Mammary epithelial cell (primary cell): ENCODE measurements at regions of chr1 and their contacts with region 1.

Region 1: GRCh38 chr1:55679971-55680370 is 464.8 kb upstream of the USP24 start:
- DNase-seq: no peak
- H3K4me3 ChIP-seq: no peak overlapping the region
- H3K27ac ChIP-seq: no peak overlapping the region
- H3K4me1 ChIP-seq: no peaks in the 10 kb centered on the region
- H3K27me3 ChIP-seq: no peaks in the 10 kb centered on the region
- CTCF ChIP-seq: no peak

Region 2: DNA sequence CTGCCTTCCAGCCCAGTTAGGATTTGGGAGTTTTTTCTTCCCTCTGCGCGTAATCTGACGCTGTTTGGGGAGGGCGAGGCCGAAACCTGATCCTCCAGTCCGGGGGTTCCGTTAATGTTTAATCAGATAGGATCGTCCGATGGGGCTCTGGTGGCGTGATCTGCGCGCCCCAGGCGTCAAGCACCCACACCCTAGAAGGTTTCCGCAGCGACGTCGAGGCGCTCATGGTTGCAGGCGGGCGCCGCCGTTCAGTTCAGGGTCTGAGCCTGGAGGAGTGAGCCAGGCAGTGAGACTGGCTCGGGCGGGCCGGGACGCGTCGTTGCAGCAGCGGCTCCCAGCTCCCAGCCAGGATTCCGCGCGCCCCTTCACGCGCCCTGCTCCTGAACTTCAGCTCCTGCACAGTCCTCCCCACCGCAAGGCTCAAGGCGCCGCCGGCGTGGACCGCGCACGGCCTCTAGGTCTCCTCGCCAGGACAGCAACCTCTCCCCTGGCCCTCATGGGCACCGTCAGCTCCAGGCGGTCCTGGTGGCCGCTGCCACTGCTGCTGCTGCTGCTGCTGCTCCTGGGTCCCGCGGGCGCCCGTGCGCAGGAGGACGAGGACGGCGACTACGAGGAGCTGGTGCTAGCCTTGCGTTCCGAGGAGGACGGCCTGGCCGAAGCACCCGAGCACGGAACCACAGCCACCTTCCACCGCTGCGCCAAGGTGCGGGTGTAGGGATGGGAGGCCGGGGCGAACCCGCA is 640.5 kb before region 1 on chr1 and contains the start of gene PCSK9:
- CTCF ChIA-PET with region 1: no interaction called
- dilution Hi-C with region 1: no loop called
- in situ Hi-C with region 1: no loop called
- intact Hi-C with region 1: no loop called
- DNase-seq: peak; percentile 77
- H3K4me3 ChIP-seq: peak within 1 kb of the TSS; percentile 18 to 73 (median 56)
- H3K27ac ChIP-seq: peak within 1 kb of the TSS; percentile 58
- H3K4me1 ChIP-seq: peaks cover 28% of the 10 kb centered on the region
- H3K27me3 ChIP-seq: peaks cover 10% of the 10 kb centered on the region
- CTCF ChIP-seq: no peak
- total RNA-seq, gene PCSK9: 0.67 to 75.0 TPM

Region 3: DNA sequence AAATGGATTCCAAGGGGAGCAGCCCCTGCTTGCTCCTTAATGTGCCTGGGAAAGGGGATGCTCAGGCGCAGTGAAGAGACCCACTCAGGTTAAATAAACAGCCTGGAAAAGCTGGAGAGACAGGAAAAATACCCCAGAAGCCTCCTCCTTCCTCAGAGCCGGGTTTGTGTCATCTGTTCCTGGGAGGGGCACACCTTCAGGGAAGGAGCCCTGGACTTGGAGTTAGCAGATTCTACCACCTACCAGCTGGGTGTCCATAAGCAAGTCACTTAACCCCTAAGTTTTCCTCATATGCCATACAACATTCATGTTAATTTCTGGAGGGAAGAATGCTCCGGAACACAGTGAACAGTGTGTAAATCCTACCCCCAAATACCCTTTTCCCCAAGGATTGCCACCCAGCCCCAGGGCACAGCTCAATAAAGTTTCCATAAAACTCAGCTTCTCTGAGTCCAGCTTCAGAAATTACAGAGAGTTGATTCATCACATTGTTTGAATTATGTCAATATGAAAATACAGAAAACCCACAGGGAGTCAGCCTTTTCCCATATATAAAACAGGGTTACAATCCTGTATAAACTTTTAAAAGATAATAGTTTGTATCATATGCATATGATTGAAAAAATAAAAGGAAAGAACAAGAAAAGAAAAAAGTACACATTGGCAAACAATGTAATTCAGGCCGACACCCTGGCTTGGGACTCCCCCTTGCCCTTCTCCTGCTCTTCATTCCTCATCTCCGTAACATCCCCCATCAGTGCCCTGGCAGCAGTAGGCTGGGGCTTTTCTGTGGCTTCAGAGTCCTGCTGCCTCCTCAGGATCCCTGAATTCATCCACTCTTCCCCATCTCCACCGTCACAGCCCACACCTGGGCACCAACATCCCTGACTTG is 173.0 kb before region 1 on chr1:
- CTCF ChIA-PET with region 1: no interaction called
- dilution Hi-C with region 1: no loop called
- in situ Hi-C with region 1: no loop called
- intact Hi-C with region 1: no loop called
- DNase-seq: peak; percentile 40
- H3K4me3 ChIP-seq: no peak overlapping the region
- H3K27ac ChIP-seq: no peak overlapping the region
- H3K4me1 ChIP-seq: peaks cover 11% of the 10 kb centered on the region
- H3K27me3 ChIP-seq: no peaks in the 10 kb centered on the region
- CTCF ChIP-seq: no peak

Region 4: DNA sequence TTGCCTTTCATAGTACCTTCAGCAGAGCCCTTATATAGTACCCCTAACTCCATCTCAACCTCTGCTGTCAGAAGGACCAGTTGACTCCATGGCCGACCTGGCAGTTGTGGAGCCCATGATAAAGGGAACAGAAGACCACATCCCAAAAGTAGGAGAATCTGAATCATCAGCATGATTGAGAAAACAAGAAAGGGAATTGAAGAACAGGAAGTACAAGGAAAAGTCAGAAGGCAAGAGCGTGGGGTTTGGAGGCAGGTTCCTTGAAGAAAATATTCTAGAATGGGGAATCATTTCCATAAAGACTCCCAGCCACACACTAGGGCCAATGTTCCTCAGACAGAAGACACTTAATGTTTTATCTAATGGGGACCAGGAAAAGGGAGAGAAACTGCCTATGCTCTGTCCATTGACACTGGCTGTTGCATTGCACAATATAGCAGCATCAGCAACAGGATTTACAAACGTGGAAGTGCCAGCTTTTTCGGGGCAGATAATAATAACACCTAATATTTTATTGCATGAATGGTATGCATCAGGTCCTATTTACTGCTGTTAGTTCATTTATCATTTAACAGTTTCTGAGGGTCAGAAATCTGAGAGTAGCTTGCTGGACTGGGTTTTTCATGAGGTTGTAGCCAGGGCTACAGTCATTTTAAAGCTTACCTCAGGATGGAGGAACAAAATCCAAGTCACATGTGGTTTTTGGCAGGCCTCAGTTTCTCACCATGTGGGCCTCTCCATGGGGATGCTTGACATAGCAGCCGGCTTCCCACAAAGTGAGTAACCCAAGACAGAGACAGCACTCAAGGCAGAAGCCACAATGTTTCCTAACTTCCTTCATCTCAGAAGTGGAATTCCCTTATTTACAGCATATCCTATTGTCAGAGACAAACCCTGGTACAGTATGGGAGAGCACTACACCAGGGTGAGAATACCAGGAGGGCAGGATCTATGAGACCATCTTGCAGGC is 416.0 kb after region 1 on chr1:
- CTCF ChIA-PET with region 1: no interaction called
- dilution Hi-C with region 1: no loop called
- in situ Hi-C with region 1: no loop called
- intact Hi-C with region 1: no loop called
- DNase-seq: peak; percentile 52
- H3K4me3 ChIP-seq: no peak overlapping the region
- H3K27ac ChIP-seq: no peak overlapping the region
- H3K4me1 ChIP-seq: no peaks in the 10 kb centered on the region
- H3K27me3 ChIP-seq: no peaks in the 10 kb centered on the region
- CTCF ChIP-seq: no peak

Region 5: GRCh38 chr1:56557746-56558145 is 877.8 kb after region 1 on chr1:
- CTCF ChIA-PET with region 1: interaction called, 28 read pairs
- dilution Hi-C with region 1: no loop called
- in situ Hi-C with region 1: no loop called
- intact Hi-C with region 1: no loop called
- DNase-seq: no peak
- H3K4me3 ChIP-seq: no peak overlapping the region
- H3K27ac ChIP-seq: no peak overlapping the region
- H3K4me1 ChIP-seq: no peaks in the 10 kb centered on the region
- H3K27me3 ChIP-seq: no peaks in the 10 kb centered on the region
- CTCF ChIP-seq: no peak

Region 6: GRCh38 chr1:57007948-57008347 is 1328.0 kb after region 1 on chr1:
- CTCF ChIA-PET with region 1: no interaction called
- dilution Hi-C with region 1: no loop called
- in situ Hi-C with region 1: no loop called
- intact Hi-C with region 1: no loop called
- DNase-seq: no peak
- H3K4me3 ChIP-seq: no peak overlapping the region
- H3K27ac ChIP-seq: no peak overlapping the region
- H3K4me1 ChIP-seq: no peaks in the 10 kb centered on the region
- H3K27me3 ChIP-seq: no peaks in the 10 kb centered on the region
- CTCF ChIP-seq: no peak